K562 (cell line): ENCODE measurements at regions of chr22 and their contacts with region 1.

Region 1: DNA sequence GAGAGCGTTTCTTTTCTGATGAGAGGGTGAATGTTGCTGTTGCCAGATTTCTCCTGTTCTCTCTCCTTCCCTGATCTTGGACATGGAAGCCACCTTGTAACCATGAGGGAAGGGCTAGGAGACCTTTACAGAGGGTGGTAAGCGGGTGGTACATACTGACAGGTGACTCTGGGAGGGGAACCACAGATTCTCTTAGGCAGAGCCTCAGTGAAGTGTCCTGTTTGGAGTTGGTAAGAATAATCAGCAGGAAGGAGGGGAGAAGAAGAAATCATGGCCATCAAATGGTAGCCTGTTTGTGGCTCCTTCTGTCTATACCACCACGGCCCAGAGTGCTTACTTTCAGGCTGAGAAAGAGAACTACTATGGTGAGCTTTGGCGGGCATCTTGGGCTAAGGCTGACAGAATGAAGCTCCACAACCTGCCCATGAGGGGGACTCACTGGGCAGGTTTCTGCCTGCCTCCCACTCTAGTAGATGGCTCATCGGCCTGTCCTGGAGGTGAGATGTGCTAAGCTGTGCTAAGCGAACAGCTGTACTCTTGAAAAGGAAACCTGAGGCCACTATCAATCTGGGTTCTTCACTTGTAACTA is 55.3 kb upstream of the CLTCL1 start:
- DNase-seq: peak in 2 of 4 experiments; percentile 30 to 36
- ATAC-seq: no peak; the same call in 2 of the 3 replicates
- H3K4me3 ChIP-seq: no peak overlapping the region
- H3K27ac ChIP-seq: no peak overlapping the region
- H3K4me1 ChIP-seq: no peaks in the 10 kb centered on the region
- H3K27me3 ChIP-seq: no peaks in the 10 kb centered on the region
- CTCF ChIP-seq: no peak
- EP300 ChIP-seq: no peak
- POLR2A ChIP-seq: 0 out of 2 replicates have a peak, but pooled peaks have one; percentile 25
- RAD21 ChIP-seq: no peak

Region 2: DNA sequence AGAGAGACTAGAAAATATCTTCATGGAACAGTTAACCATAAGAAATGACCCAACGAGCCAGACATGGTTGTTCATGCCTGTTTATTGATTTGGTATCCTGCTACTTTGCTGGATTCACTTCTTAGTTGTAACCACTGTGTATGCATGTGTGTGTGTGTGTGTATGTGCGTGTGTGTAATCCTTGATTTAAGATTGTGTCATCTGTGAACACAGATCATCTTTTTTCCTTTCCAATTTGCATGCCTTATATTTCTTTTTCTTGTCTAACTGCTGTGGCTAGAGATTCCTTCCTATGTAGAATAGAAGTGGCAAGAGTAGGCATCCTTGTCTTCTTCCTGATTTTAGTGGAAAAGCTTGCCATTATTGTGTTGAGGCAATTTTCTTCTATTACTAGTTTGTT is 38.9 kb before region 1 on chr22:
- CTCF ChIA-PET with region 1: no interaction called
- POLR2A ChIA-PET with region 1: no interaction called
- in situ Hi-C with region 1: no loop called
- intact Hi-C with region 1: loop called (anchors 5 kb)
- DNase-seq: no peak
- ATAC-seq: no peak
- H3K4me3 ChIP-seq: no peak overlapping the region
- H3K27ac ChIP-seq: no peak overlapping the region
- H3K4me1 ChIP-seq: no peaks in the 10 kb centered on the region
- H3K27me3 ChIP-seq: peaks cover 12 to 13% of the 10 kb centered on the region in 2 experiments; a peak in 4 of 5 replicates
- CTCF ChIP-seq: no peak
- EP300 ChIP-seq: no peak
- POLR2A ChIP-seq: no peak
- RAD21 ChIP-seq: no peak

Region 3: DNA sequence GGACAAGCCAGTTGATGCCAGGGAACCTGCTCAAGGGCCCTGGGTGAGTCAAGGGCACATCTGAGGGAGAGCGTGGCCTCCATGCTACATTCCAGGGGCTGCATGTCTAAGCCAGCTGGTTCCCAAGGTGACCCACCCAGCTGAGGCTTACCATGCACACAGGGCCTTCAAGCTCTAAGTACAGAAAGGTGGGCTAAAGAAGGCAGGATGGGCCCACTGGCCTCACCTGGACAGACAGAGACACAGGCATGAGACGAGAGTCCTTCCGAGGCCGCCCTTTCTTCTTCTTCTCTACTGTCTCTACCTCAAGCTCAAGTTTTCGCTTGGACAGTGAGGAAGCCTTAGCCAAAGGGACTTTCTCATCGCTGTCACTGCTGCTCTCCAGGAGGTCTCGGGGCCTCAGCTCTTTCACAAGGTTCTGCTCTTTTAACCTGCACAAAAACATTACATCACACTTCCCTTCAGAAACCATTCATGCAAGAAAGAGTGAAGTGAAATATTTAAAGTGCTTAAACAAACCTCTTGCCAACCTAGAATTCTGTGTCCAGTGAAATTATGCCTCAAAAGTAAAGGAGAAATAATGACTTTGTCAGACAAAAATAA is 14.8 kb after region 1 on chr22:
- CTCF ChIA-PET with region 1: no interaction called
- POLR2A ChIA-PET with region 1: interaction called, 12 read pairs
- in situ Hi-C with region 1: no loop called
- intact Hi-C with region 1: no loop called
- DNase-seq: no peak
- ATAC-seq: no peak
- H3K4me3 ChIP-seq: no peak overlapping the region
- H3K27ac ChIP-seq: no peak overlapping the region
- H3K4me1 ChIP-seq: no peaks in the 10 kb centered on the region
- H3K27me3 ChIP-seq: no peaks in the 10 kb centered on the region
- CTCF ChIP-seq: no peak
- EP300 ChIP-seq: no peak
- POLR2A ChIP-seq: no peak
- RAD21 ChIP-seq: no peak